IMR-90 (cell line): ENCODE measurements at regions of chr1 and their contacts with region 1.

Region 1: DNA sequence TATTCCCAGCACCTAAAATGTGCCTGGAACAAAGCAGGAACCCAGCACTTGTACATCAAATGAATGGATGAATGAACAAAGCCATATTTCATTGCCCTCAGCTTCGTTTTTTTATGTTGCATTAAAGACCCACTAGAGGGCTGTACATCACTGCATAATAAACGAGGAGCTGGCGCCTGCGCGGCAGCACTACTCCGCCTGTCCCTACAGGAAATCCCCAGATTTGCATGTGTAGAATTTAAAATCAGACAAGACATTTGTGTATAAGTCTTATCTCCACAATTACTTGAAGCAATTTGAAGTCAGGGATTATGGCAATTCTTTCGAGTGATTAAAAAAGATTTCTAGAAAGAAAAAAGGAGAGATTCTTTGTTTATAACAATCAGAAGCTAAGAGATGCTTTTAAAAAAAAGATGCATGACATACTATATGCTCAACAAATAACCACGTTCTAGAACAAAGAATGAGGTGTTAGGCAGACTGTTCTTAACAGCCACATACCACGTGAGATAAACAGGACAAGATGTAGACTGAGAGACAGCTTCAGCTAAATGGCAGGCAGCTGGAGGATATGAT is 5.4 kb upstream of the NEK2 start:
- DNase-seq: peak; percentile 91
- ATAC-seq: peak; percentile 98
- H3K4me3 ChIP-seq: no peak overlapping the region
- H3K27ac ChIP-seq: no peak overlapping the region
- H3K4me1 ChIP-seq: no peaks in the 10 kb centered on the region
- H3K27me3 ChIP-seq: peaks cover 5% of the 10 kb centered on the region; the same call in 1 of the 2 replicates
- CTCF ChIP-seq: peak; percentile 90
- POLR2A ChIP-seq: no peak
- RAD21 ChIP-seq: peak; percentile 90

Region 2: GRCh38 chr1:211527006-211527405 is 153.8 kb before region 1 on chr1:
- CTCF ChIA-PET with region 1: no interaction called
- POLR2A ChIA-PET with region 1: no interaction called
- dilution Hi-C with region 1: no loop called
- in situ Hi-C with region 1: no loop called
- intact Hi-C with region 1: no loop called
- DNase-seq: no peak
- ATAC-seq: no peak
- H3K4me3 ChIP-seq: no peak overlapping the region
- H3K27ac ChIP-seq: no peak overlapping the region
- H3K4me1 ChIP-seq: no peaks in the 10 kb centered on the region
- H3K27me3 ChIP-seq: peaks cover 10% of the 10 kb centered on the region
- CTCF ChIP-seq: no peak
- POLR2A ChIP-seq: no peak
- RAD21 ChIP-seq: no peak

Region 3: GRCh38 chr1:211613093-211613947 is 67.5 kb before region 1 on chr1:
- CTCF ChIA-PET with region 1: no interaction called
- POLR2A ChIA-PET with region 1: no interaction called
- dilution Hi-C with region 1: no loop called
- in situ Hi-C with region 1: no loop called
- intact Hi-C with region 1: no loop called
- DNase-seq: peak; percentile 94
- ATAC-seq: peak; percentile 99
- H3K4me3 ChIP-seq: no peak overlapping the region
- H3K27ac ChIP-seq: peak overlapping the region; percentile 85
- H3K4me1 ChIP-seq: peaks cover 9% of the 10 kb centered on the region
- H3K27me3 ChIP-seq: no peaks in the 10 kb centered on the region
- CTCF ChIP-seq: no peak
- POLR2A ChIP-seq: no peak
- RAD21 ChIP-seq: peak; percentile 8; the same call in 1 of the 2 replicates

Region 4: GRCh38 chr1:211830330-211831142 is 149.7 kb after region 1 on chr1 and contains the start of gene LPGAT1:
- CTCF ChIA-PET with region 1: interaction called, 4 read pairs
- POLR2A ChIA-PET with region 1: no interaction called
- dilution Hi-C with region 1: no loop called
- in situ Hi-C with region 1: no loop called
- intact Hi-C with region 1: loop called (anchors 1 kb)
- DNase-seq: peak; percentile 52
- ATAC-seq: peak; percentile 91
- H3K4me3 ChIP-seq: peak within 1 kb of the TSS; percentile 81
- H3K27ac ChIP-seq: peak within 1 kb of the TSS; percentile 39
- H3K4me1 ChIP-seq: peaks cover 12% of the 10 kb centered on the region
- H3K27me3 ChIP-seq: no peaks in the 10 kb centered on the region
- CTCF ChIP-seq: peak; percentile 69
- POLR2A ChIP-seq: peak; percentile 56
- RAD21 ChIP-seq: peak; percentile 45
- total RNA-seq, gene LPGAT1: 13.6 and 25.6 TPM in 2 replicates

Region 5: GRCh38 chr1:211851174-211851573 is 170.3 kb after region 1 on chr1:
- CTCF ChIA-PET with region 1: no interaction called
- POLR2A ChIA-PET with region 1: no interaction called
- dilution Hi-C with region 1: no loop called
- in situ Hi-C with region 1: no loop called
- intact Hi-C with region 1: no loop called
- DNase-seq: no peak
- ATAC-seq: no peak
- H3K4me3 ChIP-seq: no peak overlapping the region
- H3K27ac ChIP-seq: no peak overlapping the region
- H3K4me1 ChIP-seq: no peaks in the 10 kb centered on the region
- H3K27me3 ChIP-seq: no peaks in the 10 kb centered on the region; the same call in 1 of the 2 replicates
- CTCF ChIP-seq: no peak
- POLR2A ChIP-seq: no peak
- RAD21 ChIP-seq: no peak

Region 6: GRCh38 chr1:212012034-212012740 is 331.3 kb after region 1 on chr1:
- CTCF ChIA-PET with region 1: interaction called, 3 read pairs
- POLR2A ChIA-PET with region 1: no interaction called
- dilution Hi-C with region 1: no loop called
- in situ Hi-C with region 1: no loop called
- intact Hi-C with region 1: loop called (anchors 2 kb)
- DNase-seq: peak; percentile 65
- ATAC-seq: peak; percentile 98
- H3K4me3 ChIP-seq: no peak overlapping the region
- H3K27ac ChIP-seq: no peak overlapping the region
- H3K4me1 ChIP-seq: peaks cover 1% of the 10 kb centered on the region; the same call in 1 of the 2 replicates
- H3K27me3 ChIP-seq: no peaks in the 10 kb centered on the region
- CTCF ChIP-seq: peak; percentile 89
- POLR2A ChIP-seq: no peak
- RAD21 ChIP-seq: peak; percentile 80

Region 7: DNA sequence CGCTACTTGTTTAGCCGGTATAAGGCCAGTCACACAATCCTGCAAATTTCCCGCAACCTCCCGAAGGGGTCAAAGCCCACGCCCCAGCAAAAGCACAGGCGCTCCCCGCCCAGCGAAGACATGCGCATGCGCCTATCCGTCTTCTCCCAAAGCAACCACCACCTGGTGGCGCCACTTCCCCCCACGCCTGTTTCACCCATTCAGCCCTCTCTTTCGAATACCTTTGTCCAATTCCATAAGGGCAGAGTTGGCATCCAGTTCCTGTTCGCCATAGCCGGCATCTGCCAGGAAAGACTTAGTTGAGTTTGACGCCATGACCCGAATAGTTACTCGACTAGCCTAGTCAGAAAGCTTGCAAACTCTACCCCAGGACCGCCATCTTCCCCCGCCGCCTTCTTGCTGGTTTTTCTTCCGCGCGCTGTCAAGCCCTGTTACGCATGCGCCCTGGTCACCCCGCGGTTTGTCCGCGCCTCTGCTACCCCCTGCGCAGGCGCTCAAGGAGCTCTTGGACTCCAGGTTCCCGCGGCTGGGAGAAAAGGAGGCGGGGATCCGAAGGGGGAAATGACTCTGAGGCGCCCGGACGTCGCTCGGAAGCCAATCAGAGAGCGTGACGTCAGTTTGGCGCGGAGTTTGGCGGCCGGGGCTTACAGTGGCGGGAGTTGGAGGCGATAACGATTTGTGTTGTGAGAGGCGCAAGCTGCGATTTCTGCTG is 354.4 kb after region 1 on chr1 and contains the starts of genes DTL and INTS7:
- CTCF ChIA-PET with region 1: interaction called, 43 read pairs
- POLR2A ChIA-PET with region 1: no interaction called
- dilution Hi-C with region 1: no loop called
- in situ Hi-C with region 1: loop called (anchors 10 kb)
- intact Hi-C with region 1: loop called (anchors 1 kb)
- DNase-seq: peak; percentile 99
- ATAC-seq: peak; percentile 87
- H3K4me3 ChIP-seq: peak within 1 kb of the TSS; percentile 77
- H3K27ac ChIP-seq: peak within 1 kb of the TSS; percentile 82
- H3K4me1 ChIP-seq: peaks cover 10% of the 10 kb centered on the region
- H3K27me3 ChIP-seq: no peaks in the 10 kb centered on the region
- CTCF ChIP-seq: peak; percentile 80
- POLR2A ChIP-seq: peak; percentile 82
- RAD21 ChIP-seq: no peak
- total RNA-seq, gene DTL: 16.7 and 19.9 TPM in 2 replicates
- total RNA-seq, gene INTS7: 20.3 and 24.9 TPM in 2 replicates

Region 8: GRCh38 chr1:212291505-212292134 is 610.8 kb after region 1 on chr1:
- CTCF ChIA-PET with region 1: no interaction called
- POLR2A ChIA-PET with region 1: no interaction called
- dilution Hi-C with region 1: no loop called
- in situ Hi-C with region 1: no loop called
- intact Hi-C with region 1: loop called (anchors 5 kb)
- DNase-seq: peak; percentile 44
- ATAC-seq: peak; percentile 66
- H3K4me3 ChIP-seq: no peak overlapping the region
- H3K27ac ChIP-seq: no peak overlapping the region
- H3K4me1 ChIP-seq: peaks cover 6% of the 10 kb centered on the region
- H3K27me3 ChIP-seq: no peaks in the 10 kb centered on the region
- CTCF ChIP-seq: peak; percentile 76
- POLR2A ChIP-seq: no peak
- RAD21 ChIP-seq: peak; percentile 81

Region 9: GRCh38 chr1:212368073-212368484 is 687.2 kb after region 1 on chr1:
- CTCF ChIA-PET with region 1: no interaction called
- POLR2A ChIA-PET with region 1: no interaction called
- dilution Hi-C with region 1: no loop called
- in situ Hi-C with region 1: loop called (anchors 25 kb)
- intact Hi-C with region 1: loop called (anchors 2 kb)
- DNase-seq: peak; percentile 81
- ATAC-seq: peak; percentile 98
- H3K4me3 ChIP-seq: no peak overlapping the region
- H3K27ac ChIP-seq: no peak overlapping the region
- H3K4me1 ChIP-seq: no peaks in the 10 kb centered on the region
- H3K27me3 ChIP-seq: no peaks in the 10 kb centered on the region
- CTCF ChIP-seq: peak; percentile 88
- POLR2A ChIP-seq: no peak
- RAD21 ChIP-seq: peak; percentile 93